Sciatic nerve (tissue), 2 donors: ENCODE measurements at regions of chr2 and their contacts with region 1.

Region 1: GRCh38 chr2:177169810-177170514 is 42.6 kb upstream of the HNRNPA3 start:
- DNase-seq: no peak
- ATAC-seq: no peak

Region 2: GRCh38 chr2:177195194-177195593 is 25.2 kb after region 1 on chr2:
- intact Hi-C with region 1: loop called (anchors 1 kb)
- DNase-seq: no peak
- ATAC-seq: no peak